RWPE1 (cell line): ENCODE measurements at regions of chr1 and their contacts with region 1.

Region 1: GRCh38 chr1:31624309-31624708 is 6.8 kb downstream of the HCRTR1 start:
- DNase-seq: no peak
- H3K27ac ChIP-seq: peak overlapping the region; percentile 98
- CTCF ChIP-seq: no peak

Region 2: DNA sequence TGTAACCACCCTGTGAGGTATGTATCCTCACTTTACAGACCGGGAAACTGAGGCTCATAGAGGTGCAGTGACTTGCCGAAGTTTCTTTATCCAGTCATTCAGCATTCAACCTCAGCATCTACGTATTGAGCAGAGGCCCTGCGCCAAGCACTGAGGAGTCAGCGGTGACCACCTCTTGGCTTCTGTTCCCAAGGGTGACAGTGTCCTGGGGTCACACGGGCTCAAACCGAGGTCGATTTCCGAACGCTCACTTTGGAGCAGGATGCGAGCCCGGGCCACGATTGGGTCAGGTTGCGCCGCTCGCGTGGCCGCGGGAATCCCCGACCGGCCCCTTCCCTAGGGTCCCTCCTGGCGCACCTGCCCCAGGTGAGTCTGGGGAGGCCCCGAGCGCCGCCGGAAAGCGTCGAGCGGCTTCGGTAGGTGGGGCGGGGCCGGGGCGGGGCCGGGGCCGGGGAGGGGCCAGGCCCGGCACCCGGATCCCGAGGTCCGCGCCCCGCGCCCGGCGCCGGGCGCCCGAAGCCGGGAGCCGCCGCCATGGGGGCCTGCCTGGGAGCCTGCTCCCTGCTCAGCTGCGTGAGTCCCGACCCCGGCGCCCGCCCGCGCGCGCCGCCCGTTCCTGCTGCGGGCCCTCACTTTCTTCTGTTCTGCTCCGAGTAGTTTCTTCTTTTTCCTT is 211.4 kb before region 1 on chr1 and contains the start of gene SERINC2:
- CTCF ChIA-PET with region 1: no interaction called
- POLR2A ChIA-PET with region 1: interaction called, 10 read pairs
- DNase-seq: peak; percentile 82
- H3K27ac ChIP-seq: peak within 1 kb of the TSS; percentile 98
- CTCF ChIP-seq: no peak

Region 3: GRCh38 chr1:31531177-31531999 is 92.9 kb before region 1 on chr1:
- CTCF ChIA-PET with region 1: no interaction called
- POLR2A ChIA-PET with region 1: no interaction called
- DNase-seq: peak; percentile 65
- H3K27ac ChIP-seq: no peak overlapping the region
- CTCF ChIP-seq: no peak